IMR-90 (cell line): ENCODE measurements at regions of chr2 and their contacts with region 1.

Region 1: DNA sequence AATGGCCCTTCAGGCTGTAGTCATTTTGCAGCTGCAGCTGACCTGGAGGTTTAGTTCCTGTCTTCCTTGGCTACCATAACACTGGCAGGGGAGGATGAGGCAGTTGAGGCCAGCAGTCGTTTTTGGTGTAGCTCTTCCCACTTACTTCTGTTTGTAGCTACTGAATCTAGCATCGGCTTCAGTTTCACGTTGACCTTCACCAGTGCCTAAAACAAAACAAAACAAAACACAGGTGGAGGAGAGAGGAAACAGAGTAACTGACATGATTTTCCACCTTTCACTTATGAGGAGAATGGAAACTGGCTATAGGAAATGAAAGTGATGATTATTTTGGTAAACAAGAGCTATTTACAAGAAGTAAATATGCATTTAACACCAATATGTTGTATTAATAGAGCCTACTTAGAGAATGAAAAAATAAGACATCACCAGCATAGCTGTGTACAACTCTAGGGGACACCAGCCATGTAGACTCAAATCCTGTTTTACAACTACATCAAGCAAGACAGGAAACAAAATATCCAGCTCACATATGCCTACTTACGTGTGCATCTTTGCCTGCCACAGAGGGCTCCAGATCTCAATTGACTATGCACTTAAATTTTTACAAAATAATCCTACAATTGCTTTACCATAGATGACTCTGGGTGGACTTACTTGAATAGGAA is 236.9 kb downstream of the AGPS start:
- DNase-seq: no peak
- ATAC-seq: no peak
- H3K4me3 ChIP-seq: no peak overlapping the region
- H3K27ac ChIP-seq: no peak overlapping the region
- H3K4me1 ChIP-seq: no peaks in the 10 kb centered on the region
- H3K27me3 ChIP-seq: peaks cover 6% of the 10 kb centered on the region
- CTCF ChIP-seq: no peak
- POLR2A ChIP-seq: no peak
- RAD21 ChIP-seq: no peak

Region 2: GRCh38 chr2:177445200-177445599 is 184.3 kb before region 1 on chr2:
- CTCF ChIA-PET with region 1: no interaction called
- POLR2A ChIA-PET with region 1: no interaction called
- dilution Hi-C with region 1: no loop called
- in situ Hi-C with region 1: no loop called
- intact Hi-C with region 1: no loop called
- DNase-seq: no peak
- ATAC-seq: no peak
- H3K4me3 ChIP-seq: no peak overlapping the region
- H3K27ac ChIP-seq: no peak overlapping the region
- H3K4me1 ChIP-seq: no peaks in the 10 kb centered on the region
- H3K27me3 ChIP-seq: no peaks in the 10 kb centered on the region
- CTCF ChIP-seq: no peak
- POLR2A ChIP-seq: no peak
- RAD21 ChIP-seq: no peak

Region 3: DNA sequence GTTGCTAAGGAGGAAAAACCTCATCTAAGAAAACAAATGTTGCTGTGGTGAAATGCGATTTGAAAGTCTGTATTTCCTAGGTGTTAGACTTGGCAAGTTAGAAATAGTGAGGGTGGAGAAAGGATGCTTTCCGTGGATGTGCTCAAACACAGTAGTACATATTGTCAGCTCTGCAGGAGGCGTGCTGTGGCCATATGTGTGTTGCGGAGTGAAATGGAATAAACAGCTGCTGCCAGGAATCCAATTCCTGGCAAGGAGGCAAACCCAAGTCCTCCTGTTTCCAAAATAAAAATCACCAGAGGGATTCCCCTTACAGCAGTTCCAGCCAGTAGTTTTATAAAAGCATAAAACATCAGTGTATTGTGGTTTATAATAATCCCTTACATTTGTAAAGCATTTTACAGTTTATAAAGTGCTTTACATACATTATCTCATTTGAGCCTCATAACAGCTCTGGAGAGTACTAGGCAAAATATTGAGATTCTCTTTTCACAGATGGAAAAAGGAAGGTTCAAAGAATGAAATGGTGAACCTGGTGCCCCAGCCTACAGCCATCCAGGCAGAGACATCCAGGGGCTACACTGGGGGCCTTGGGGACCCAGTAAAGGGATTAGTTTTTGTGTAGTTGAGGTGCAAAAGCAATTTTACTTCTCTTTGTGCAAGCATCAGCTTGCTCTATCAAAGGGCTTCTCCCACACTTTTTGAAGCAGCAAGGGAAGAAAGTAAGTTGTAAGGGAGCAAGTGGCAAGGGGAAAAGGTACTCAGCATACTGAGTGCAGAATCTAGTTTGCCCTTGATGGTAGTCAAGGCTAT is 31.0 kb before region 1 on chr2:
- CTCF ChIA-PET with region 1: no interaction called
- POLR2A ChIA-PET with region 1: no interaction called
- dilution Hi-C with region 1: no loop called
- in situ Hi-C with region 1: no loop called
- intact Hi-C with region 1: loop called (anchors 1 kb)
- DNase-seq: peak; percentile 23
- ATAC-seq: no peak
- H3K4me3 ChIP-seq: no peak overlapping the region
- H3K27ac ChIP-seq: no peak overlapping the region
- H3K4me1 ChIP-seq: no peaks in the 10 kb centered on the region
- H3K27me3 ChIP-seq: peaks cover 14% of the 10 kb centered on the region
- CTCF ChIP-seq: no peak
- POLR2A ChIP-seq: no peak
- RAD21 ChIP-seq: no peak